ENCODE measurements at regions of chr6 and their contacts with region 1.

Region 1: GRCh38 chr6:89242574-89243330 is 25.6 kb upstream of the GABRR1 start:
- DNase-seq: peak in 1 of 2 donors; percentile 84
- H3K4me3 ChIP-seq: no peak overlapping the region
- H3K27ac ChIP-seq: no peak overlapping the region
- H3K4me1 ChIP-seq: peaks cover 0 to 5% (median 0%) of the 10 kb centered on the region in 4 donors
- H3K27me3 ChIP-seq: no peaks in the 10 kb centered on the region
- CTCF ChIP-seq: peak in 4 of 7 experiments; percentile 26 to 63 (median 54)
- EP300 ChIP-seq: no peak
- POLR2A ChIP-seq: no peak

Region 2: GRCh38 chr6:88982720-88983119 is 260.0 kb before region 1 on chr6:
- intact Hi-C with region 1: loop called (anchors 5 kb)
- DNase-seq: peak; percentile 56 to 85
- H3K4me3 ChIP-seq: no peak overlapping the region
- H3K27ac ChIP-seq: no peak overlapping the region
- H3K4me1 ChIP-seq: peaks cover 0 to 25% (median 4%) of the 10 kb centered on the region in 4 donors
- H3K27me3 ChIP-seq: no peaks in the 10 kb centered on the region
- CTCF ChIP-seq: peak in 4 of 7 experiments; percentile 54 to 83 (median 66)
- EP300 ChIP-seq: no peak
- POLR2A ChIP-seq: no peak

Region 3: DNA sequence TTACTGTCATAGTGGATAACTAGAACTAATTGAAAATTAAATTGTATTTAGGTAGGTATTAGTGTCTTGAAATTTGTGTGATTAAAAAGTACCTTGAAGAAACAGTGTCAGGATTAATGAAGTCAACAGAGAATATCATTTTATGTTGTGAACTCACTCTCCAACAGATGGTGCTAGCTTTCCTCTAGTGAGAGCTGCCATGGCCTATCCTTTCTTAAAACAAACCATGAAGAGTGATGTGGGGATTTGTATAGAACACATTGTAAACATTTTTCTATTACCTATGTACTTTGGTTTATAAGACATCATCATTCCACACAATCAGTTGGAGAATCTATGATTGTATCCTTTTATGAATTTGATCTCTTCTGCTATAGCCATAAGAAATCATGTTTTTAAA is 120.1 kb before region 1 on chr6:
- intact Hi-C with region 1: loop called (anchors 5 kb)
- DNase-seq: peak in 1 of 2 donors; percentile 65
- H3K4me3 ChIP-seq: no peak overlapping the region
- H3K27ac ChIP-seq: no peak overlapping the region
- H3K4me1 ChIP-seq: peaks cover 0 to 12% (median 4%) of the 10 kb centered on the region in 4 donors
- H3K27me3 ChIP-seq: no peaks in the 10 kb centered on the region
- CTCF ChIP-seq: peak in 4 of 7 experiments; percentile 8 to 39 (median 26)
- EP300 ChIP-seq: no peak
- POLR2A ChIP-seq: no peak

Measured in stomach (tissue), 19 donors.